ENCODE measurements at regions of chr11 and their contacts with region 1.

Region 1: GRCh38 chr11:71977743-71978418 is 20.8 kb upstream of the IL18BP start:
- DNase-seq: peak; percentile 89
- H3K4me3 Mint-ChIP-seq: no peak overlapping the region
- H3K27ac Mint-ChIP-seq: peak overlapping the region; percentile 62
- H3K4me1 Mint-ChIP-seq: peaks cover 5% of the 10 kb centered on the region
- H3K27me3 Mint-ChIP-seq: no peaks in the 10 kb centered on the region

Region 2: DNA sequence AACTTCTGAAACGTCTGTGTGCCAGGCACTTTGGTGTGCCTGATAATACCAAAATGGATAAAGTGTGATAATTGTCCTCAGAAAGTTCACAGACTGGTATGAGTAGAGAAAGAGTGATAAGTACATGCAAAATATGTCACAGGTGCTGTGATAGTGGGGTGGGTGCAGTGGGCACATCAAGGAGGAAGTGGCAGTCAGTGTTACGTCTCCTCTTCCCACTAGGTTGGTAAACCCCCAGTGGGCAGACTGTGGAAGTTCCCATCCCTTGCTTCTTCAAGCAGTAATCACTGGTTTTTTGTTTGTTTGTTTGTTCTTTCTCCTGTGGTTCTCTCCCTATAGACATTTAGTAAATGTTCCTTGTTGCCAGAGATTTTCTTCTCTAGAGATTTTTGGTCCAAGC is 43.7 kb before region 1 on chr11:
- intact Hi-C with region 1: loop called (anchors 5 kb)
- DNase-seq: no peak
- H3K4me3 Mint-ChIP-seq: no peak overlapping the region
- H3K27ac Mint-ChIP-seq: no peak overlapping the region
- H3K4me1 Mint-ChIP-seq: peaks cover 37% of the 10 kb centered on the region
- H3K27me3 Mint-ChIP-seq: no peaks in the 10 kb centered on the region

Region 3: GRCh38 chr11:71998662-71999310 is 20.9 kb after region 1 on chr11 and contains the start of gene IL18BP:
- intact Hi-C with region 1: loop called (anchors 1 kb)
- DNase-seq: peak; percentile 82
- H3K4me3 Mint-ChIP-seq: peak within 1 kb of the TSS; percentile 78
- H3K27ac Mint-ChIP-seq: peak within 1 kb of the TSS; percentile 92
- H3K4me1 Mint-ChIP-seq: peaks cover 21% of the 10 kb centered on the region
- H3K27me3 Mint-ChIP-seq: no peaks in the 10 kb centered on the region
- total RNA-seq, gene IL18BP: 15.0 and 19.9 TPM in 2 replicates

Measured in activated CD4-positive, alpha-beta T cell treated with anti-CD3 and anti-CD28 coated beads, Interleukin-2, amount 10 ng/mL, durations not matched to agents 24 days and 14 days (primary cell).